Activated B cell treated with CpG ODN at 0.5 μM for 24 hours (primary cell): ENCODE measurements at regions of chr13 and their contacts with region 1.

Region 1: GRCh38 chr13:54511366-54511765 is 1482.8 kb downstream of the OLFM4 start:
- DNase-seq: no peak
- ATAC-seq: no peak
- H3K4me3 Mint-ChIP-seq: no peak overlapping the region
- H3K27ac Mint-ChIP-seq: no peak overlapping the region
- H3K4me1 Mint-ChIP-seq: no peaks in the 10 kb centered on the region
- H3K27me3 Mint-ChIP-seq: no peaks in the 10 kb centered on the region
- CTCF ChIP-seq: no peak

Region 2: GRCh38 chr13:54162062-54162461 is 349.3 kb before region 1 on chr13:
- CTCF ChIA-PET with region 1: no interaction called
- POLR2A ChIA-PET with region 1: no interaction called
- intact Hi-C with region 1: no loop called
- DNase-seq: no peak
- ATAC-seq: no peak
- H3K4me3 Mint-ChIP-seq: no peak overlapping the region
- H3K27ac Mint-ChIP-seq: no peak overlapping the region
- H3K4me1 Mint-ChIP-seq: no peaks in the 10 kb centered on the region
- H3K27me3 Mint-ChIP-seq: no peaks in the 10 kb centered on the region
- CTCF ChIP-seq: no peak

Region 3: DNA sequence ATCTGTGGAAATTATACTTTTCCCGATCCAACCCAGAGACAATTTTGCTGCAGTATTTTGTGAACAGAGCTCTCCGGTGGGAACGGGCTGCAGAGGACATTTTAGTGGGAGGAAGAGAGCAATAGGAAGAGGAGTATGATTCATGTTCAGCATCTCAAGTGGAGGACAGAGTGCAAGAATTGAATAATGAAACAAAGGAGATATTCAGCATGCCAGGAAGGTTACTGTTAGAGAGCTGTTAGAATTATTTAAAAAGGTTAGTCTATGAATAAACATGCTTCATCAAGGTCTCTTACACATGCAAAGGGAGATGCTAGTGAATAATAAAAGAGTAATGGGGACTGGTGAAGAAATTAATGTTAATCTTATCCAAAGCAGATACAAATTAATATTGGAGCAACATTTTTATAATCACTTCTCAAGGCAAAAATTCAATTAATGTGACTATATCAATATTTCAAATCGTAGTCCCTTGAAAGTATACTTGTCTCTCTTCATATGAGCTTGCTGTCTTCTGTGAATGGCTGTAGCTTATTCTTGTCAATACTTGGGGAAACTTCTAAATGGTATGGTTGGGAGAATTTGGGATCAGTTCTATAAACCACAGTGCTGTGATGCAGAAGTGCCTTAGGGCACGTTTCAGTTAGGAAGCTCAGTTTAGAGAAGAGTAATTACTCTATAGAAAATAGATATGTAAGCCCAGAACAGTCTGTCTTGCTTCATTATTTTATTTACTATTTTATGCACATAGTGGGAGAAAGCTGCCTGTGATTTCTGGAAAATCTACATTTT is 316.9 kb before region 1 on chr13:
- CTCF ChIA-PET with region 1: no interaction called
- POLR2A ChIA-PET with region 1: interaction called, 10 read pairs
- intact Hi-C with region 1: no loop called
- DNase-seq: no peak
- ATAC-seq: no peak
- H3K4me3 Mint-ChIP-seq: no peak overlapping the region
- H3K27ac Mint-ChIP-seq: no peak overlapping the region
- H3K4me1 Mint-ChIP-seq: no peaks in the 10 kb centered on the region
- H3K27me3 Mint-ChIP-seq: no peaks in the 10 kb centered on the region
- CTCF ChIP-seq: no peak

Region 4: GRCh38 chr13:55120631-55121030 is 609.3 kb after region 1 on chr13:
- CTCF ChIA-PET with region 1: no interaction called
- POLR2A ChIA-PET with region 1: no interaction called
- intact Hi-C with region 1: no loop called
- DNase-seq: no peak
- ATAC-seq: no peak
- H3K4me3 Mint-ChIP-seq: no peak overlapping the region
- H3K27ac Mint-ChIP-seq: no peak overlapping the region
- H3K4me1 Mint-ChIP-seq: no peaks in the 10 kb centered on the region
- H3K27me3 Mint-ChIP-seq: no peaks in the 10 kb centered on the region
- CTCF ChIP-seq: no peak